Activated CD4-positive, alpha-beta memory T cell treated with anti-CD3 and anti-CD28 coated beads for 36 hours (primary cell): ENCODE measurements at regions of chr4 and their contacts with region 1.

Region 1: GRCh38 chr4:26144526-26145155 is 176.2 kb upstream of the RBPJ start:
- DNase-seq: no peak
- H3K4me3 Mint-ChIP-seq: peak overlapping the region; percentile 30
- H3K27ac Mint-ChIP-seq: peak overlapping the region; percentile 90
- H3K4me1 Mint-ChIP-seq: peaks cover 52% of the 10 kb centered on the region
- H3K27me3 Mint-ChIP-seq: no peaks in the 10 kb centered on the region

Region 2: GRCh38 chr4:25635504-25635903 is 509.1 kb before region 1 on chr4:
- CTCF ChIA-PET with region 1: no interaction called
- POLR2A ChIA-PET with region 1: no interaction called
- intact Hi-C with region 1: no loop called
- DNase-seq: no peak
- H3K4me3 Mint-ChIP-seq: no peak overlapping the region
- H3K27ac Mint-ChIP-seq: no peak overlapping the region
- H3K4me1 Mint-ChIP-seq: no peaks in the 10 kb centered on the region
- H3K27me3 Mint-ChIP-seq: no peaks in the 10 kb centered on the region

Region 3: DNA sequence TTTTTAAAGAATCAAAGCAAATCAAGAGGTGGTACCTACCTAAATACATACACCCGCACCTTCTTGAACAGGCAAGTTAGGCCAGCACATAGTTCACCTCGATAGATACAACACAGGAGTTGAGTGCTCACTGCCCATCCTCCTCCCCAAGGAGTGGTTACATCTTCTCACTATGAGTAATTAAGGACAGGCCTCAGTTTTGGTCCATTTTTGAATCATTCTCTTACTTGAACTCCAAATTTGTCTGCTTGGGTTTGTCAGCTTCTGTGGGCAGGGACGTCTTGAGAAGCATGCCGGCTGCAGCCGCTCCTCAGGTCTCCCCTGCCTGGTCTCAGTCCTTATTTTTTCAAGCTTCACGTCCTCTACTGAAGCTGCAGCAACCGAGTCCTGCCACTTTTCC is 14.5 kb before region 1 on chr4:
- CTCF ChIA-PET with region 1: interaction called, 4 read pairs
- POLR2A ChIA-PET with region 1: interaction called, 5 read pairs
- intact Hi-C with region 1: loop called (anchors 1 kb)
- DNase-seq: peak; percentile 59
- H3K4me3 Mint-ChIP-seq: no peak overlapping the region
- H3K27ac Mint-ChIP-seq: peak overlapping the region; percentile 67
- H3K4me1 Mint-ChIP-seq: peaks cover 62% of the 10 kb centered on the region
- H3K27me3 Mint-ChIP-seq: no peaks in the 10 kb centered on the region

Region 4: DNA sequence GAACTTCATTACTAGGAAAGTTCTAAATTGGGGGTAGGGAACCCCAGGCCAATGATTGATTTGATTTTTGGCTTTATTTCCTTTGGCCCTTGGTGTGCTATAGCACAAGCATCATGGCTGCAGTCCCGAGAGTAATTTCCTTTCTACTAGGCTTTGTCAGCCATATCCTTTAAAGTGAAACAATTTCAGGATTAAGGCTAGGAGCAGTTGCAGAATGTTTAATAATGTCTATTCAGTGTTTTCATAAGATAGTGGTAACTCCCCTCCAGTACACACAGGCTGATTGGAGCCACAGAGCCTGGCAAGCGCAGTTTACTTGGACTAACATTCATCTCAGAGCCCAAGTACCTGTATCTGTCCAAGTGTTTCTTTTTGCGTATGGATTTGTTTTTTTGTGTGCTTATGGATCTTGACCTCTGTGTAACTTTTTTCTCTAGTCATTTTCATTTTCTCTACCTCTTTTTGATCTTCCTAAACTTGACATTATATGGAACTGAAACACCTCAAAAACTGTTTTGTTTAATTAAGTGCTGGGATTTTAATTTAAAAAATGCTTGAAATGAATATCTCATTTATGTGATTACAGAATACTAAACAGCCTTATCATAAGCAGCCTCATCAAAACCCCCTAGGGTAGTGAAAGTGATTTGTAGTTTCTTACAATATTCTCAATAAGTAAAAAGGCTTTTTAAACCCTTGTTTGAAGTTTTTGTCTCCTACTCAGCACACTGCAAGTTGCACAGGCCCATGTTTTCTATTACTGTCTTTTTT is 723.5 kb after region 1 on chr4:
- CTCF ChIA-PET with region 1: no interaction called
- POLR2A ChIA-PET with region 1: no interaction called
- intact Hi-C with region 1: no loop called
- DNase-seq: no peak
- H3K4me3 Mint-ChIP-seq: peak overlapping the region; percentile 30
- H3K27ac Mint-ChIP-seq: peak overlapping the region; percentile 16
- H3K4me1 Mint-ChIP-seq: peaks cover 73% of the 10 kb centered on the region
- H3K27me3 Mint-ChIP-seq: no peaks in the 10 kb centered on the region